Activated CD8-positive, alpha-beta T cell treated with anti-CD3 and anti-CD28 coated beads for 36 hours (primary cell): ENCODE measurements at regions of chr20 and their contacts with region 1.

Region 1: DNA sequence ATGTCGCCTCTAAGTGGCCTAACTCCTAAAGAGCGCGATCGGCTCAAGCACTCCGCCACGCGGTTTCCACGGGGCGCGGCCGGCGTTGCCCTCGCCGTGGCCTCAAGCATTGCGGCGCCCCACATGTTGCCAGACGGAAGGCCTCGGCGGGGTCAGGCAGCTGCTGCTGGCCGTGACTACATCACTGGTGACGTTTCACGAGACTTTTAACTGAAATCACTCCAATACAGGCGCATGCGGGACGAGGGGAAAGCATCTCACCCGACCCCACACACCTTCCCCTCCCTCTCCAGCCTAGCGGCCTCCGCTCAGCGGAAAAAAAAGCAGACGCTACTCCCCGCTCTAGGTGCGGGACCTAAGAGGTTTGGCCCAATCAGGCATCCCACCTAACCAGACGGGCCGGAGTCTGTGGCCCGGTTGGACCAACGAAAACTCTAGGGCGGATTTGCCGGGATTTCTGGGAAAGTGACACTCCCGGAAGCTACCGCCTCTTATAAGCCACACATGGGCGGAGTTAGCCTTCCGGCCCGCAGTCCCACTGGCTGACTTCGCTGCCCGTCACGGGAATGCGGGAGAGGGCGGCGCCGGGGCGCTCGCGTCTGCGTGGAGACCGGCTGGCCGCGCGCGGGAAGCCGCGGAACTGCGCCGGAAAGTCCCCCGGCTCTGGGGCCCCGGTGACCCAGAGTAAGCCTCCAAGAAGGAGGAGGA is at the start of gene NXT1:
- DNase-seq: peak; percentile 95
- ATAC-seq: peak; percentile 86
- H3K4me3 Mint-ChIP-seq: peak within 1 kb of the TSS; percentile 94
- H3K27ac Mint-ChIP-seq: peak within 1 kb of the TSS; percentile 99
- H3K4me1 Mint-ChIP-seq: peaks cover 37% of the 10 kb centered on the region
- H3K27me3 Mint-ChIP-seq: no peaks in the 10 kb centered on the region
- CTCF ChIP-seq: no peak
- total RNA-seq, gene NXT1: 35.8 to 37.8 TPM

Region 2: GRCh38 chr20:22836877-22837276 is 513.5 kb before region 1 on chr20:
- CTCF ChIA-PET with region 1: no interaction called
- POLR2A ChIA-PET with region 1: no interaction called
- intact Hi-C with region 1: no loop called
- DNase-seq: no peak
- ATAC-seq: no peak
- H3K4me3 Mint-ChIP-seq: no peak overlapping the region
- H3K27ac Mint-ChIP-seq: no peak overlapping the region
- H3K4me1 Mint-ChIP-seq: no peaks in the 10 kb centered on the region
- H3K27me3 Mint-ChIP-seq: no peaks in the 10 kb centered on the region
- CTCF ChIP-seq: no peak

Region 3: DNA sequence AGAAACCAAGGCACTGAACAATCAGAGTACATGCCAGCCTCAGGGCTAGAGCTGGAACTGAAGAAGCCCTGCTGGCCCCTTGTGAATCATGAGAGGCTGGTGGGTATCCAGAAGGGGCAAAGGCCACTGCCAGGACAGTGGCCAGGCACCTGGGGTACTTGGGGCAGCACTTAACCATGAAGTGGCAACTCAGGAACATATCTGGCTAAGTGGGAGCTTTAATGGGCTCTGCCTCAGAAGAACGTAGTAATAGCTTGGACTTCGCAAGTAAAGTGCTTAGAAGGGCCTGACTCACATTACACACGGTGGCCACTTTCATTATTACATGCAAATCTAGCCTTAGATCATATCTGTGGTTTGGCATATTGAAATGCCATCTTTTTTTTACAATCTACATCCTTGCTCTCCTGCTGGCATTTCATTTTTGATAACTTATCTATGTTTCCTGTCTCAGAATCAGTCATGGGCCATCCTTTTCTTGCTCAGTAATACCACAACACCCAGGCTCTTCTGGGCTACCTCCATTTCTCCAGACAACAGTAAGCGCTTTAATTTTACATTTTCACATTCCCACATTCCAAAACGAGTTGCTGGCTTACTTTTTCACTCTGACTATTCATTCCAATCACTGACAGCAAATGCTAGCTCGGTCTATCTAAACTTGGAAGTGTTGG is 49.4 kb after region 1 on chr20:
- CTCF ChIA-PET with region 1: interaction called, 12 read pairs
- POLR2A ChIA-PET with region 1: interaction called, 9 read pairs
- intact Hi-C with region 1: no loop called
- DNase-seq: peak; percentile 54
- ATAC-seq: peak; percentile 92
- H3K4me3 Mint-ChIP-seq: no peak overlapping the region
- H3K27ac Mint-ChIP-seq: peak overlapping the region; percentile 78
- H3K4me1 Mint-ChIP-seq: peaks cover 61% of the 10 kb centered on the region
- H3K27me3 Mint-ChIP-seq: no peaks in the 10 kb centered on the region
- CTCF ChIP-seq: no peak

Region 4: DNA sequence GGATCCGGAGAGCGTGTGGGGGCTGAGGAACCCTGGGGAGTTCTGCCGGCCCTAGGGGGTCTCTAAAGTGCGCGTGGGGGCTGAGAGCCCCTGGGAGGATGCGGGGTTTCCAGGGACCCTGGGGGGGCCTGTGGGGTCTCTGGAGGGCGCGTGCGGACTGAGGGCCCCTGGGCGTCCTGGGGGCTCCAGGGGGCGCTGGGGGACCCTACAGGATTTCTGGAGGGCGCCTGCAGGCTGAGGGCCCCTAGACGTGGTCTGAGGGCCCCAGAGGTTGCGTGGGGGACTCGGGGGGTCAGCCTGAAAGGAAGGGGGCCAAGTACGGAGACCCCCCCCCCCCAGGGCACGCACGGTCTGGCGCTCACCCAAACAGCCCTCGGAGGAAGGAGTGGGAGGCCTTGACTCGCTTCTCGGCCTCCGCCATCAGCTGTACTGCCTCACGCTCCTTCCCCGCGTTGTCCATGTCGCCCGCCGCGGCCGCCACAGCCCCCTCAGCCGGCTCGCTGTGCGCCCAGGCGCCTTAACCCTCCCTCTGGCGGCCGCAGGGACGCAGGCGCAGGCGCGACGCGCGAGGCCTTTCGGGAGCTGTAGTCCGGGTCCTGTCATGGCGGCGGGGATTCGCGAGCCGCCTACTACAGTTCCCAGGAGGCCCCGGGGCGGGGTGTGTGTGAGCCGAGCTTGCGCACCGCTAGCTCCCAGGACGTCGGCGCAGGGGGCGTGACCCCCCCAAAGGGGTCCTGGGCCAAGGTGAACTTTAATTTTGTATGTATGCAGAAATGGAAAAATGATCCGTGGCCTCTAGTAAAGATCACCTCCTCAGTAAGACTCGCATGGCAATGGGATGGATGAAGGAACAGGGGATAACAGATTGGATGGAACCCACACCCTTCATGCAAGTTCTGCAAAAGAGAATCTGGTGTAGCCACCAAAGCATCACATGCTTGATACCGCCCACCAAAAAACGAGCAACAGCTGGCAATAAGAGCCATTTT is 70.9 kb after region 1 on chr20 and contains the start of gene NAPB:
- CTCF ChIA-PET with region 1: interaction called, 41 read pairs
- POLR2A ChIA-PET with region 1: interaction called, 17 read pairs
- intact Hi-C with region 1: no loop called
- DNase-seq: peak; percentile 96
- ATAC-seq: peak; percentile 98
- H3K4me3 Mint-ChIP-seq: peak within 1 kb of the TSS; percentile 93
- H3K27ac Mint-ChIP-seq: peak within 1 kb of the TSS; percentile 80
- H3K4me1 Mint-ChIP-seq: peaks cover 62% of the 10 kb centered on the region
- H3K27me3 Mint-ChIP-seq: no peaks in the 10 kb centered on the region
- CTCF ChIP-seq: peak; percentile 43
- total RNA-seq, gene NAPB: 14.3 to 16.8 TPM